ENCODE measurements at regions of chr12 and their contacts with region 1.

Region 1: DNA sequence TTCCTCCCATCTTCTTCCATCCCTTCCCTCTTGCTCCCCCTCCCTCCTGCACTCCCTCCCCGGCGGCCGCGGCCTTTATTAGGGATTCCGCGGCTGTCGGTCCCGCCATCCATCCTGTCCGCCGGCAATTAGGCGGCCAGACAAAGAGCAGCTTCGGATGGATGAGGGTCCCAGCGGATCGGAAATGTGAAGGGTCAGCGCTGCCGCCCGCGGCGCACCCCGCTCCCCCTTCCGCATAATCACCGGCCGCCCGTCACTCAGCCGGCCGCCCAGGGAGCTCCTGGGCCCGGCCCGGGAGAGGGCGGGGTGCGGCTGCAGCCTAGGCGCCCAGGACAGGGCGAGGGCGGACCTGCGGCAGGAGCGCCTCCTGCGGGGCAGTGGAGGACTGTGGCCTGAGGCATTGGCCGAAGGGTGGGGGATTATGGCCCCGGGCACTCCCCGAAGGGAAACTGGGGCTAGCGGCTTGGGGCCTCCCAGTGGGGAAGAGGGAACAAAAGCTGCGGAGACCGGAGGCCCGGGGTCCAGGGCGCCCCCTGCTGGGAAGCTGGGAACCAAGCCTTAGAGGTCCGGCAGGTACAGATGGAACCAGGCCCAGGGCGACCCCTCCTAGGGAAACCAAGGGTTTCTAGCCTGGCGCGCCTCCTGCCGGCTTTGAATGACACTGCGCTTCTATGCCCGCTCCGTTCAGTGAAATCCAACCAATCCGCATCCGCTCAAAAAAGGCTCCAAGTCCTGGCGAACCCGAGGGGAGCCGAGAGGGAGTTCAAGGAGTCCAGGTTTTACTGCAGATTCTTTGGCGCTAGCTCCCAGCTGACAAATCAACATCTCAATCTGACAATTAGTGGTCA is 4.4 kb upstream of the DNAJC22 start:
- DNase-seq: peak; percentile 42 to 84 (median 63)
- ATAC-seq: peak; percentile 78
- H3K4me3 ChIP-seq: peak overlapping the region; percentile 51
- H3K4me3 Mint-ChIP-seq: peak overlapping the region; percentile 78
- H3K27ac ChIP-seq: no peak overlapping the region
- H3K27ac Mint-ChIP-seq: no peak overlapping the region
- H3K4me1 ChIP-seq: peaks cover 66% of the 10 kb centered on the region
- H3K4me1 Mint-ChIP-seq: peaks cover 59% of the 10 kb centered on the region
- H3K27me3 ChIP-seq: peaks cover 74 to 79% of the 10 kb centered on the region in 2 experiments
- H3K27me3 Mint-ChIP-seq: peaks cover 89% of the 10 kb centered on the region
- CTCF ChIP-seq: peak; percentile 87

Region 2: GRCh38 chr12:49288412-49288853 is 53.9 kb before region 1 on chr12:
- CTCF ChIA-PET with region 1: interaction called, 42 read pairs
- POLR2A ChIA-PET with region 1: interaction called, 5 read pairs
- intact Hi-C with region 1: loop called (anchors 1 kb)
- DNase-seq: peak; percentile 50 to 86 (median 64)
- ATAC-seq: peak; percentile 76
- H3K4me3 ChIP-seq: no peak overlapping the region
- H3K4me3 Mint-ChIP-seq: no peak overlapping the region
- H3K27ac ChIP-seq: no peak overlapping the region
- H3K27ac Mint-ChIP-seq: no peak overlapping the region
- H3K4me1 ChIP-seq: no peaks in the 10 kb centered on the region
- H3K4me1 Mint-ChIP-seq: no peaks in the 10 kb centered on the region
- H3K27me3 ChIP-seq: peaks cover 2 to 23% of the 10 kb centered on the region in 2 experiments
- H3K27me3 Mint-ChIP-seq: peaks cover 44% of the 10 kb centered on the region
- CTCF ChIP-seq: peak; percentile 94

Region 3: DNA sequence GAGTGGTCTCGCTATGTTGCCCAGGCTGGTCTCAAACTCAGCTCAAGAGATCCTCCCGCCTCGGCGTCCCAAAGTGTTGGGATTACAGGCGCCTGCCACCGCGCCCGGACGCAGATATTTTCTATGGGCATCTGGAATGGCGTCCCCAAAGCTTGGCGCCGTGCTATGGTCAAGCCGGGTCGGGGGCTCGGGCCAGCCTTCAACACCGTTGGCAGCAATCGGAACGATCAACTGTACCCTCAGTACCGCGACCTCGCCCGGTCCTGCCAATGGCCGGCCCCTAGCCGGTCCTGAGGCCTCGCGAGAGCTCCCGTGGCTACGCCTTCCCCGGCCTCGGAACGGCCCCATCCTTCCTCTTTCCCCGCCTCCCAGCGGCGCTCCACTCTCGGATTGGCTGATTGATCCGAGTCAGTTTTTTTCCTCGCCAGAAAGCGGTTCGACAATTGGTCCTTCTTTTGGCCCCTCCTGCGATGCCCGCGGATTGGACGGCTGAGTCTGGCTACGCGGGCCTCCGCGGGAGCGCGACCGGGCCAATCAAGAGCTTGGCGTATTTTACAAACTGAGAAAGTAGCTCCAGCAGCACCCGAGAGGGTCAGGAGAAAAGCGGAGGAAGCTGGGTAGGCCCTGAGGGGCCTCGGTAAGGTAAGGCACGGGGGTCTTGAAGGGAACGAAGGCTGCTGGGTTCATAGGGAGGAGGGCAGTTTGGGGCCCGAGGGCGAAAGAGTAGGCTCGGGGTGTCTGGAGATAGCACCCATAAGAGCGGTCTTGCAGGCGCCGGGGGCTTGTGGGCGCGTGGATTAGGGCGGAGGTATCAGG is 19.4 kb before region 1 on chr12 and contains the start of gene TROAP:
- CTCF ChIA-PET with region 1: interaction called, 19 read pairs
- POLR2A ChIA-PET with region 1: interaction called, 17 read pairs
- intact Hi-C with region 1: loop called in 1 of 2 experiments (anchors 1 kb)
- DNase-seq: peak; percentile 93 to 99 (median 95)
- ATAC-seq: peak; percentile 95
- H3K4me3 ChIP-seq: peak within 1 kb of the TSS; percentile 89
- H3K4me3 Mint-ChIP-seq: peak within 1 kb of the TSS; percentile 90
- H3K27ac ChIP-seq: peak within 1 kb of the TSS in 1 of 2 donors; percentile 3
- H3K27ac Mint-ChIP-seq: peak within 1 kb of the TSS; percentile 56
- H3K4me1 ChIP-seq: peaks cover 19% of the 10 kb centered on the region
- H3K4me1 Mint-ChIP-seq: peaks cover 19% of the 10 kb centered on the region
- H3K27me3 ChIP-seq: no peaks in the 10 kb centered on the region
- H3K27me3 Mint-ChIP-seq: no peaks in the 10 kb centered on the region
- CTCF ChIP-seq: no peak
- total RNA-seq, gene TROAP: 0.30 to 0.31 TPM

Region 4: DNA sequence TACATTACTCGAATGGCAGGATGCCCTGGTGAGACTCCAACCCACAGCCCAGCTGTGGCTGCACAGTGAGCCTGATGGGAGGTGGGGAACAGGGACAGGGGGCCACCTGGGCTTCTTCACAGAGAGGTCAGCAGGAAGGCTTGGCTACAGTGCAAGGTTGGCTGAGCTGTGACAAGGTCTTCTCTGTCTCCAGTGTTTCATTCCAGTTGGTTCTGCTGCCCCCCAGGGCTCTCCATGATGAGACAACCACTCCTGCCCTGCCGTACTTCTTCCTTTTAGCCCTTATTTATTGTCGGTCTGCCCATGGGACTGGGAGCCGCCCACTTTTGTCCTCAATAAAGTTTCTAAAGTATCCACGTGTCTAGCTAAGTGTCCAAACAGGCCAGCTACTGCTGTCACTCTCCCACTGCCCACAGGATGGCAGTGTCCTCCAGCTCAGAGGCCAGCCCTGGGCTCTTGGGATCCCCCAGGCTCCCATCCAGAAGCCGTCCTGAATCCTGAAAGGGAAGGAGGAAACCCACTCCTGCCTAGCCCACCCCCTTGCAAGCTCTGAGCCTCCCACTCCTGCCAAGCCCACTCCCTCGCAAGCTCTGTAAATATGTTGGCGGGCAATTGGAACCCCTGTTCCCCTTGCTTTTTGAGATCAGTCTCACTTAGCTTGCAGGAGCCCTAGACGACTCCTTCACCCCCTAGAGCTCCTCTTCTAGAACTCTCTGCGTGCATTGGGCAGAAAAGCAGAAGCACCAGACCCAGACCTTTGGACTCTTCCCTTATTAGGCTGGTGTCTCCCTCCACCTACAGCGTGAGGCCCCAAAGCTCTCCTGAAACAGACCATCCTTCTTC is 10.7 kb before region 1 on chr12:
- CTCF ChIA-PET with region 1: interaction called, 28 read pairs
- POLR2A ChIA-PET with region 1: interaction called, 7 read pairs
- intact Hi-C with region 1: no loop called
- DNase-seq: peak in 3 of 14 experiments; percentile 37 to 48 (median 48)
- ATAC-seq: peak; percentile 56
- H3K4me3 ChIP-seq: no peak overlapping the region
- H3K4me3 Mint-ChIP-seq: no peak overlapping the region
- H3K27ac ChIP-seq: no peak overlapping the region
- H3K27ac Mint-ChIP-seq: no peak overlapping the region
- H3K4me1 ChIP-seq: peaks cover 13% of the 10 kb centered on the region
- H3K4me1 Mint-ChIP-seq: peaks cover 18% of the 10 kb centered on the region
- H3K27me3 ChIP-seq: peaks cover 34 to 36% of the 10 kb centered on the region in 2 experiments
- H3K27me3 Mint-ChIP-seq: peaks cover 49% of the 10 kb centered on the region
- CTCF ChIP-seq: no peak

Region 5: GRCh38 chr12:49358483-49359141 is 16.3 kb after region 1 on chr12:
- CTCF ChIA-PET with region 1: interaction called, 47 read pairs
- POLR2A ChIA-PET with region 1: interaction called, 3 read pairs
- intact Hi-C with region 1: no loop called
- DNase-seq: peak in 8 of 14 experiments; percentile 31 to 86 (median 62)
- ATAC-seq: peak; percentile 96
- H3K4me3 ChIP-seq: no peak overlapping the region
- H3K4me3 Mint-ChIP-seq: peak overlapping the region; percentile 34
- H3K27ac ChIP-seq: no peak overlapping the region
- H3K27ac Mint-ChIP-seq: no peak overlapping the region
- H3K4me1 ChIP-seq: peaks cover 3% of the 10 kb centered on the region
- H3K4me1 Mint-ChIP-seq: peaks cover 7% of the 10 kb centered on the region
- H3K27me3 ChIP-seq: peaks cover 9 to 12% of the 10 kb centered on the region in 2 experiments
- H3K27me3 Mint-ChIP-seq: peaks cover 29% of the 10 kb centered on the region
- CTCF ChIP-seq: peak; percentile 78

Region 6: DNA sequence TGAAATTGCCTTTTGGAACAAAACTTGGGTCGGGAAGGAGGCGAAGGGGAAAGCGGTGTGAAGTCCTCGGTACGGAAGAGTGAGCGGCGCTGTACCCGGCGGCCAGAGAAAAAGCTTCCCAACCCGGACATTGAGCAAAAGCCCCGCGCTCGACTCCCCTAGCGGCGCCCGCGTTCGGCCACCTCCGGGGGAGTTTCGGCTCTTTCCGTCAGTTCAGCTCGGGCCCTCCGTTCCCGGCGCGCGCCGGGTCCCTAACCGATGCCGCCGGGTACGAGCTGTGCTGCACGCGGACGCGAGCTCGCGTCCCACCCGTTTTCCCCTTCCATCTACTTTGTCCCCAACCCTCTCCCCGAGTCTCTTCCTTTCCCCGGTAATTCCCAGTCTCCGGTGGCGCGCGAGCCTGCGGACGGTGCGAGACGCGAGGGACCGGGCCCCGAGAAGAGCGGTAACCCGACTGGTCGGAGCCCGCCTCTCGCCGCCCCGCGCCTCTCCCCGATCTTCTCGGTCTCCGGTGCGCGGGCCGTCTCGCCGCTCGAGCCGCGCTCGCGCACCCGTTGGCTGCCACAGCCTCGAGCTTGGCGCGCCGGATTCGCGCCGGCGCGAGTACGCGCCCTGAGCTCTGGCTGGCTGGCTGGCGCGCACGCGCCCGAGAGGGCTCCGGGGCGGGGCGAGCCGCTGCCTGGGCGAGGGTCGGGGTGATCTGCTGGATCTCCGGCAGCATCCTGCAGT is 24.5 kb after region 1 on chr12:
- CTCF ChIA-PET with region 1: interaction called, 33 read pairs
- POLR2A ChIA-PET with region 1: interaction called, 13 read pairs
- intact Hi-C with region 1: no loop called
- DNase-seq: peak; percentile 69 to 92 (median 81)
- ATAC-seq: peak; percentile 82
- H3K4me3 ChIP-seq: peak overlapping the region; percentile 88
- H3K4me3 Mint-ChIP-seq: peak overlapping the region; percentile 99
- H3K27ac ChIP-seq: peak overlapping the region; percentile 66 to 70
- H3K27ac Mint-ChIP-seq: peak overlapping the region; percentile 76
- H3K4me1 ChIP-seq: peaks cover 15% of the 10 kb centered on the region
- H3K4me1 Mint-ChIP-seq: peaks cover 30% of the 10 kb centered on the region
- H3K27me3 ChIP-seq: no peaks in the 10 kb centered on the region
- H3K27me3 Mint-ChIP-seq: no peaks in the 10 kb centered on the region
- CTCF ChIP-seq: no peak

Region 7: GRCh38 chr12:49462083-49462744 is 119.9 kb after region 1 on chr12:
- CTCF ChIA-PET with region 1: no interaction called
- POLR2A ChIA-PET with region 1: no interaction called
- intact Hi-C with region 1: no loop called
- DNase-seq: no peak
- ATAC-seq: no peak
- H3K4me3 ChIP-seq: no peak overlapping the region
- H3K4me3 Mint-ChIP-seq: no peak overlapping the region
- H3K27ac ChIP-seq: no peak overlapping the region
- H3K27ac Mint-ChIP-seq: no peak overlapping the region
- H3K4me1 ChIP-seq: no peaks in the 10 kb centered on the region
- H3K4me1 Mint-ChIP-seq: no peaks in the 10 kb centered on the region
- H3K27me3 ChIP-seq: no peaks in the 10 kb centered on the region
- H3K27me3 Mint-ChIP-seq: no peaks in the 10 kb centered on the region
- CTCF ChIP-seq: no peak